Right cardiac atrium (tissue), 5 donors: ENCODE measurements at regions of chr2 and their contacts with region 1.

Region 1: DNA sequence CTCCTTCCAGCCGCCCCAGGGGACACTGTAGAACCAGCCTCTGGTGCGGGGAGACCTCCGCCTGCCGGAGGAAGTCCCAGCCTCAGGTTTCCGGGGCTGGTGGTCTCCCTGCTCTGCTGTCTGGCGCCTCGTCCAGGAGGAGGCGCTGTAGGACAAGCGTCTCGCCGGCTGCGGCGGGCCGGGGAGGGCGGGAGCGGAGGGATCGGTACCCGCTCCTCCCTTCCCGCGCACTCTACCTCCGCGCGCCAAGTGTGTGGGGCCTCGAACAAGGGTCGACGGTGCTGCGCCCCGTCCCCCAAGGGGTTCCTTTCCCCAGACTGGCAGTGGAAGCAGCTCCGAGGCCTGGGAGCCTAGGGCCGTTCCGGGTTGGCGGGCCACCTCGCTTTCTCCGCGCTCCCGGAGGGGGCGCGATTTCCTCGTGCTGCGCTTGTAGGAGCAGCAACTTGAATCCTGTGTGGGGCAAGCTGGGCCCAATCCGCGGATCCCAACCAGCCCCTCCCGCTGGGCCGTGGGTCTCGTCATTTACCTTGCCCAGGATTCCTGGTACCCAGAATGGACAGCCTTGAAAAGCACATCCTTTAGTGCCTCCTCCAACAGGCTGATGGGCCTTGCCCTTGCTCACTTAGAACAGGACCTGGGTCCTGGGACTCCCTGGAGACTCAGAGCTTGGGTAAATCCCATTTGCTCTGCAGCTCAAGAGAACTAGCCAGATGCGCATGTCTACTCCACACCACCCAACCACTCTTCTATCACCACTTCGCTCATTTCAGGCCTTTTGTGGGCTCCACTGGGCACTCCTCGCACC is 10.6 kb upstream of the HOXD4 start:
- DNase-seq: peak; percentile 69 to 88 (median 86)
- ATAC-seq: peak; percentile 92 to 95
- H3K4me3 ChIP-seq: peak overlapping the region; percentile 32
- H3K27ac ChIP-seq: no peak overlapping the region
- H3K4me1 ChIP-seq: no peaks in the 10 kb centered on the region
- H3K27me3 ChIP-seq: peaks cover 8% of the 10 kb centered on the region

Region 2: DNA sequence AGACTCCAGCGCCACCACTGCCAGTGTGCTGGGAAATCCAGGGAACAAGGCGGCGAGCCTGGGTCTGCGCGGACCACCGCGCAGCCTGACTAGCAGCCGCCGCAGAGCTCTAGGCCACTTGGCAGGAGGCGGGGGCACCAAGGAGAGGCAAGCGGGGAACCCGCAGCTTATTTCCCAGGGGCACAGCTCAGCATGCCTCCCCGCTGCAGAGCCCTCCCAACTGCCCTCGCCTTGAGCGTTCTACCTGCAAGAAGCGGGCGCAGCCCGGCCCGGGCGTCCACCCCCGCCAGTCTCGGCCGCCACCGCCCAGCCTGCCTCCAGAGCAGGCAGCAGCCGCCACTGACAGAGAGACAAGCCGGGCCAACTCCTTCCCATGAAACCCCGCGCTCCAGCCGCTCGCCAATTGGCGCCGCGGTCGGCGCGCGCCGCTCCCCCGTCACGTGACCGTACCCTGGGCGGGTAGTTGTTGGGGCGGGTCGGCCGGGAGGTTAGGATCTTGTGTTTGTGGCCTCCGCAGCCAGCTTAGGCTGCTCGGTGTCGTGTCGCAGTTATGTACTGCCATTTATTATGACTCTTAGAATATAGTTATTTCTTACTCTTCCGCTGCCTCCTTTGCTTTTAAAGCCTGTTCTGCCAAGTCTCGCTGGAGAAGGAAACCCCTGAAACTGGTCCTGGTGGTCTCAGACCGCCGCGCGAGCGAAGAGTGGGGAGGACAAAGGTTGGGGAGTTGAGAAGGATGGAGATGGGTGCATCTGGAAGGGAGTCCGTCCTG is 138.6 kb before region 1 on chr2 and contains the start of gene LNPK:
- intact Hi-C with region 1: no loop called
- DNase-seq: peak; percentile 92 to 97 (median 97)
- ATAC-seq: peak; percentile 99
- H3K4me3 ChIP-seq: peak within 1 kb of the TSS; percentile 92
- H3K27ac ChIP-seq: peak within 1 kb of the TSS; percentile 92
- H3K4me1 ChIP-seq: peaks cover 6% of the 10 kb centered on the region
- H3K27me3 ChIP-seq: no peaks in the 10 kb centered on the region
- total RNA-seq, gene LNPK: 22.6 to 37.2 (median 24.0) TPM

Region 3: GRCh38 chr2:176554101-176555048 is 413.7 kb after region 1 on chr2:
- intact Hi-C with region 1: loop called in 3 of 4 experiments (anchors 5 to 10 kb)
- DNase-seq: peak in 1 of 3 donors; percentile 60
- ATAC-seq: peak; percentile 65 to 82
- H3K4me3 ChIP-seq: peak overlapping the region; percentile 38
- H3K27ac ChIP-seq: peak overlapping the region; percentile 14
- H3K4me1 ChIP-seq: peaks cover 2% of the 10 kb centered on the region
- H3K27me3 ChIP-seq: peaks cover 2% of the 10 kb centered on the region

Region 4: DNA sequence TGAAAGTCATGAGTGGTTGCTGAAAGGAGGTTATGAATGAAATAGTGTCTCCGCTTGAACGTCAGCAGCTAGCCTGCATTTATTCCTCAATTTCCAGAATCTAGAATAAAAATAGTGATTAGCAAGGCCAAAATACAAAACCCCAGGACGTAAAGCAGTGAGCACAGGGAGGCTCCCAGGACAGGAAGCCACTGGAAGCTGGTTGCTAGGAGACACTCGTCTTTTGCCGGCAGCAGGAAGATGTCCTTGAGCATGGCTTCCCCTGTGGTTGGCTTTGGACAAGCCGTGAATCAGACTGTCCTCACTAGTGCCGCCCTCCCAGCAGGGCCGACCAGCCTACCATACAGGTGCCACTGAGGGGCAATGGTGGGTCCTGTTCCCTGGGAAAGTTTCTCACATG is 502.9 kb after region 1 on chr2:
- intact Hi-C with region 1: loop called in 3 of 4 experiments (anchors 5 kb)
- DNase-seq: no peak
- ATAC-seq: peak in 1 of 2 donors; percentile 35
- H3K4me3 ChIP-seq: no peak overlapping the region
- H3K27ac ChIP-seq: no peak overlapping the region
- H3K4me1 ChIP-seq: no peaks in the 10 kb centered on the region
- H3K27me3 ChIP-seq: no peaks in the 10 kb centered on the region

Region 5: DNA sequence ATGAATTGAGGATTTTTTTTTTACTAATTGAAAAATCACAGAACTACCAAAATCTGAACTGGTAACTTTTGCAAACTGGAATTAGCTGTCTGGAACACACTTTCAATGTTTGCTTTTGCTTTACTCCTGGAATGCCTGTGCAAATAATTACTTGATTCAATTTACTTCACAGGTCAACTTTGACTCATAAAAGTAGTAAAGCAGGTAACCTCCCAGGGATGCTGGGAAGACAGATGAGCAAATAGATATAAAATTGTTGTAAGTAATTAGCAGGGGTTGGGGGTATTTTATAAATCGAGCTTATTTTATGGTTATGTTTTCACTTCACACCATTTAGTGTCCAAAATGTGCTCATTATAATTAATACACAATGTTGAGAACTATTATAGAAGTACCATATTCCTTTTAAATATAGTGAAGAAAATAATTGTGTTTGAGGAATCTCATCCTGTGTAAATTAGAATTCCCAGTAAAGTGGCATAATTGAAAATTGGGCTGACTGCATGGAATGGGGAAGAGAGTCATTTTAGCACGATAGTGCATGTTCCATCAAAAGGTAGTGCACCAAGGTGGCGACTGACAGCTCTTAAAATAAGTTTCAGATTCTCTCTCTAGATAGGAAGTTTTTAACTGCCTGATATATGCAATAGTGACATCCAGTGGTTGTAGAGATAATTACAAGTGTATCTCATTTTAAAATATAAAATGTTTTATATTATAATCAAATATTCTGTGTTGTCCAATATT is 673.8 kb after region 1 on chr2:
- intact Hi-C with region 1: loop called in 2 of 4 experiments (anchors 10 kb)
- DNase-seq: no peak
- ATAC-seq: no peak
- H3K4me3 ChIP-seq: no peak overlapping the region
- H3K27ac ChIP-seq: no peak overlapping the region
- H3K4me1 ChIP-seq: no peaks in the 10 kb centered on the region
- H3K27me3 ChIP-seq: no peaks in the 10 kb centered on the region